ENCODE measurements at regions of chr4 and their contacts with region 1.

Region 1: GRCh38 chr4:121656269-121656641 is 40.5 kb downstream of the ANXA5 start:
- DNase-seq: peak; percentile 51
- ATAC-seq: peak; percentile 85 to 88
- H3K4me3 ChIP-seq: no peak overlapping the region
- H3K27ac ChIP-seq: no peak overlapping the region
- H3K4me1 ChIP-seq: no peaks in the 10 kb centered on the region
- H3K27me3 ChIP-seq: no peaks in the 10 kb centered on the region
- CTCF ChIP-seq: peak; percentile 26

Region 2: GRCh38 chr4:121307445-121308327 is 348.6 kb before region 1 on chr4:
- intact Hi-C with region 1: no loop called
- DNase-seq: no peak
- ATAC-seq: peak; percentile 79 to 85
- H3K4me3 ChIP-seq: no peak overlapping the region
- H3K27ac ChIP-seq: no peak overlapping the region
- H3K4me1 ChIP-seq: no peaks in the 10 kb centered on the region
- H3K27me3 ChIP-seq: no peaks in the 10 kb centered on the region
- CTCF ChIP-seq: peak; percentile 65

Region 3: DNA sequence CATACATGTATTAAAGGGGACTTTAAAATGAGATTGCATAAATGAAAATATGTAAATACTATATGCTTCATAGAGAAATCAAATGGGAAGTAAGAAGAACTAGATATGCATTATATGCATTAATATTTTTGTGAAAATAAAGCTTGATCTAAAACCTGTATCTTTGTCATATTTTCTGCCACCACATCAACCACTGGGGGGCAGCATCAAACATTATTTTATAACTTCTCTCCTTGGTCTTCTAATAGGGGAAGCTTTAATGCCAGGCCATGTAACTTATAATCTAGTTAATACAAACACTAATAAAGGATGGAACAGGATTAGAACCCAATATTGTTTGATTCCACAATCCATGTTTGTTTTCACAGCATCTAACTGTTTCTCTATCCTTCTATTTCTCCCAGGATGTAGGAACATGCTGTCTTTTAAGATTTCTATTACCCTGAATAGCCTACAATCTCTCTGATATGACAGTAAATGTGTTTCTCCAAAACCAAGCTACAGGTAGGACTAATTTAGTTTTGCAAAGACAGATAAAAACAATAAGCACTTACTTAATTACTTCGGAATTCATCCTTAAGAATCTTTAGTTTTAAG is 285.4 kb before region 1 on chr4:
- intact Hi-C with region 1: loop called (anchors 10 kb)
- DNase-seq: no peak
- ATAC-seq: peak in 1 of 2 donors; percentile 65
- H3K4me3 ChIP-seq: no peak overlapping the region
- H3K27ac ChIP-seq: no peak overlapping the region
- H3K4me1 ChIP-seq: no peaks in the 10 kb centered on the region
- H3K27me3 ChIP-seq: peaks cover 11% of the 10 kb centered on the region
- CTCF ChIP-seq: peak; percentile 62